Right cardiac atrium (tissue), 5 donors: ENCODE measurements at regions of chr7 and their contacts with region 1.

Region 1: GRCh38 chr7:16982640-16983350 is 101.0 kb upstream of the AGR3 start:
- DNase-seq: no peak
- ATAC-seq: peak in 1 of 2 donors; percentile 45
- H3K4me3 ChIP-seq: no peak overlapping the region
- H3K27ac ChIP-seq: no peak overlapping the region
- H3K4me1 ChIP-seq: no peaks in the 10 kb centered on the region
- H3K27me3 ChIP-seq: no peaks in the 10 kb centered on the region

Region 2: GRCh38 chr7:16839646-16840045 is 143.1 kb before region 1 on chr7:
- intact Hi-C with region 1: no loop called
- DNase-seq: no peak
- ATAC-seq: no peak
- H3K4me3 ChIP-seq: no peak overlapping the region
- H3K27ac ChIP-seq: no peak overlapping the region
- H3K4me1 ChIP-seq: peaks cover 3% of the 10 kb centered on the region
- H3K27me3 ChIP-seq: no peaks in the 10 kb centered on the region

Region 3: GRCh38 chr7:17530741-17531417 is 548.1 kb after region 1 on chr7:
- intact Hi-C with region 1: loop called in 1 of 4 experiments (anchors 10 kb)
- DNase-seq: no peak
- ATAC-seq: peak in 1 of 2 donors; percentile 46
- H3K4me3 ChIP-seq: no peak overlapping the region
- H3K27ac ChIP-seq: no peak overlapping the region
- H3K4me1 ChIP-seq: no peaks in the 10 kb centered on the region
- H3K27me3 ChIP-seq: no peaks in the 10 kb centered on the region

Region 4: DNA sequence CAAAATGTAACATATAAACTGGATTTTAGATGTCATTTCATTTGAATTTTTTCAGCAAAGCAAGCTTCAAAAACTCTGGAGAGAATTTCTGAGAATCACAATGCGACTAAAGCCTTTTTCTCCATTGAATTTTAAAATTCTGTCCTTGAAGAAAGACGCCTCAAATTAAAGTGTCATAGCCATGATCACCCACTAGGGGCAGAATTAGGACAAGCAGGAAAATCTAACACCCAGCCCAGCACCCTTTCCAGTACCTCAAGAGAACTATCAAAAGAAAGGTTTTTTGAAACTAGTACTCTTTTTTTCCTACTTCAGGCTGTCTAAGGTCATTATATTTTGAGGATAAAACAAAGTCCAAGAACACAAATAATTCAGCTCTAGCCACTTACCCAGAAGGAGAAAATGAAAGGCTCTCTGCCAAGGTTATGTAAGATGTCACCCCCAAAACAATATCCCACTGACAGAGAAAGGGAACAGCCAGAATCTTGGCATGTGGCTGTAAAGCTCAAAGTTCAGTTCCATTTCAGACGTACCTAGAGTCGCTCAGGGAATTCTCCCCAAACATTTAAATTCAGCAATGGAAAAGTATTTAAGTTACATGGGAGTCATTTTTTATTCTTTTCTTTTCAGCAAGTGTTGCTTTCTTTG is 658.1 kb after region 1 on chr7:
- intact Hi-C with region 1: loop called in 2 of 4 experiments (anchors 10 kb)
- DNase-seq: no peak
- ATAC-seq: no peak
- H3K4me3 ChIP-seq: no peak overlapping the region
- H3K27ac ChIP-seq: no peak overlapping the region
- H3K4me1 ChIP-seq: no peaks in the 10 kb centered on the region
- H3K27me3 ChIP-seq: no peaks in the 10 kb centered on the region

Region 5: DNA sequence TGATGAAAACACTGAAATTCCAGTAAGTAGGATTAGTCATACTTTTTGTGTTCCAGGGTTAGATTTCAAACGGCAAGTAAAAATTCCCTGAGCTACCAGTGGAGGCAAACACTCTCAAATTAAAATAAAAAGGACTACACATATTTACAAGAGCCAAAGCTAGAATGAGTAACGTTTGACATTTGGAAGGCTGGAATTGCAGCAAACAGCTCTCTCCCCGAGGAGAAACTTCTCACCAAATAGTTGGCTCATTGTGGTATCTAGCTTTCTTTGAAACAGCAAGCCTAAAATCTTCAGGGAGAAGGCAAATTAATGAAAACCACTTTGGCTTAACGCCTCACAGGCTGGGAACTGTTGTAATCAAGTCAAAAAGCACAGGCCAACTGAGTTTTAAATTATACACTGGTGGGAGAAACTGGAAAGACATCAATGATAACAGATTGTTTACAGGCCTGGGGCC is 669.2 kb after region 1 on chr7:
- intact Hi-C with region 1: loop called in 3 of 4 experiments (anchors 10 kb)
- DNase-seq: peak in 1 of 3 donors; percentile 29
- ATAC-seq: peak; percentile 89 to 93
- H3K4me3 ChIP-seq: no peak overlapping the region
- H3K27ac ChIP-seq: no peak overlapping the region
- H3K4me1 ChIP-seq: peaks cover 2% of the 10 kb centered on the region
- H3K27me3 ChIP-seq: no peaks in the 10 kb centered on the region